Breast epithelium (tissue), 4 donors: ENCODE measurements at regions of chr18 and their contacts with region 1.

Region 1: DNA sequence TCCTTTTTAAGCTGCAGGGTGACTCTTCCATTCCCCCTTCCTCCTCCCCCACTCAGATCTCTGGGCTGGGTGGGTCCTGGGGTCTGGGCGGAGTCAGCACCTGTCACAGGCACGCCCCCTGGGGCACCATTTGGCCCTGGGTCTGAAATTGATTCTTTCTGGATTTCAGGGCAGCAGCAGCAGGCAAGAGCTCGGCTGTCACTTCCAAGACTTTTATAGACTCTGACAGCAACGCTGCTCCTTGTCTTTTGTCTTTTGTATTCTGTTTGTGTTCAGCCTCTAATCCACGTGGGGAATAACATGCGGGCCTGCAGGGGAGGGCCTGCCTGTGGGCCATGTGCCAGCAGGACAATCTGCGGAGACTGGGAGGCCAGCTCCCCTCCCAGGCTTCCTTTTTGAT is 3.9 kb downstream of the BOD1L2 start:
- DNase-seq: no peak
- H3K4me3 ChIP-seq: no peak overlapping the region
- H3K27ac ChIP-seq: no peak overlapping the region
- H3K4me1 ChIP-seq: no peaks in the 10 kb centered on the region
- H3K27me3 ChIP-seq: peaks cover 0 to 12% of the 10 kb centered on the region in 2 donors
- CTCF ChIP-seq: no peak
- POLR2A ChIP-seq: no peak

Region 2: DNA sequence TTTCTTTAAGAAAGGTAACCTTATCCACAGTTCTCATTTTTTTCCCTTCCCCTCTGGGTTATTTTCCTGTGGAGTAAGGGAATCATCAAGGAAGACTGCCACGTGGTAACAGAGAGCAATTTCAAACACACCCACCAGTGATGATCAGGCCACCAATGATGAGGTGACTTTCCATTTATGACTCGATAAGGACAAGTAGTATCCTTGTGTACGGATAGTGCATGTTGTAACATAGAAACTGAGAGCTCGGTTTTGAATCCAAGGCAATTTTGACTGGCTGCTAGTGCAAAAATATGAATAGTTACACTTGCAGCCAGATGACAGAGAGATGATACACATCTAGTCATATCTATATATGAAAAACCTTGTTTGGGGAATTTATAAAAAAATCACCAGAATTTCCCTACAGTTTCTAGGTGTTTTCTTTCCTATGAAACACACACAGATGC is 1419.2 kb before region 1 on chr18:
- intact Hi-C with region 1: loop called (anchors 5 kb)
- DNase-seq: no peak
- H3K4me3 ChIP-seq: no peak overlapping the region
- H3K27ac ChIP-seq: no peak overlapping the region
- H3K4me1 ChIP-seq: no peaks in the 10 kb centered on the region
- H3K27me3 ChIP-seq: no peaks in the 10 kb centered on the region
- CTCF ChIP-seq: no peak
- POLR2A ChIP-seq: no peak

Region 3: DNA sequence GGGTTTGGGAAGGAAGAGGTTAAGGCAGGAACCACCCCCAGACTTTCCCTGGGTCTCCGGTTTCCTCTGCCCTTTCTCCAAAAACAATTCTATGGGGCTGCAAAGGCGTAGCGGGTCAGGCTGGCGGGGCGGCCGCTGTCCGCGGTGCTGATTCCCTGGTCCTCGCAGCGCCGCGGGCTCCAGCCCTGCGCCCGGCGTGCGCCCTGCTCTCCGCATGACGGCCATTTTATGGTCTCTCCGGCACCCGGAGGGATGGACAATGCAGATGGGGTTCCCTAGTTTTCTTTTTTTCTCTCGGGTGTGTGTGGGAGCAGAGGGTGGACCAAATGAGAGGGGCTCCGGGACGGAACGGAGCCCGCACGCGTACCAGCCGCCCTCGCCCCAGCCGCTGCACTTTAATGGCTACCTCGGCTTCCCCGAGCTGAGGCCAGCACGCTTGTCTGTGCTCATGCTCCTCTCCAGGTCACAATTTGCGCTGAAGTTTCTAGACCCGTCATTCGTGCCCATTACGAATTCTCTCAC is 203.2 kb after region 1 on chr18:
- intact Hi-C with region 1: no loop called
- DNase-seq: no peak
- H3K4me3 ChIP-seq: no peak overlapping the region
- H3K27ac ChIP-seq: no peak overlapping the region
- H3K4me1 ChIP-seq: no peaks in the 10 kb centered on the region
- H3K27me3 ChIP-seq: peaks cover 6 to 56% of the 10 kb centered on the region in 2 donors
- CTCF ChIP-seq: no peak
- POLR2A ChIP-seq: no peak